A549 (cell line): ENCODE measurements at regions of chr2 and their contacts with region 1.

Region 1: DNA sequence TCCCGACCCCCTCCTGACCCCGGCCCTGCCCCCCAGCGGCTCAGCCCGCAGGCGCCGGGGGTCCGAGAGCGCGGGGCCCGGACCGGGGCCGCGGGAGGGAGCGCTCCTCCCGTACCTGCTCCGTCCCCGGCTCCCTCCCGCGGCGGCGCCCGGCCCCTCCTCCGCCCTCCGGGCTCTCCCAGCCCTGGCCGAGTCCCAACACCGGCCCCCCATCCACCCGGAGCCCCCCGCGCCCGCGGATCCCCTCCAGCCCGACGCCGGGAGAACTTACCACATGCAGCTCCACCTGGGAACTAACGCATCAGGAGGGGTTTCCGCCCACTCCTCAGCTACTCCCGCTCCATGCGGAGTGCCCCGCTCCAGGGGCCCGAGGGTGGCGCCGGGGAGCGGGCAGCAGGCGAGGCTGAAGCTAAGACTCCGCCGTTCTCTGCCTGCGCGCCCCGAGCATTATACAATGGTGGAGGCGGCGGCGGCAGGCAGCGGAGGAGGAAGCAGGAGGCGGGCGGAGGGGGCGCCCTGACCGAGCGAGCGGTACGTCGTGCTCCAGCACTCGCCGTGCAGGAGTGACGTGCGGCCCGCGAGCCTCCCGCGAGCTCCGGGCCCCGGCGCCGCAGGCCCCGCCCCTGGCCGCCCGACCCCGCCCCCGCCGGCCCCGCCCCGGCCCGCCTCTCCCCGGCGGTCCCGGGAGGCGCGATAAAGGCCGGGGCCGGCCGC is at the start of gene SERTAD2:
- DNase-seq: peak; percentile 82 to 91
- ATAC-seq: peak; percentile 83 to 86
- H3K4me3 ChIP-seq: peak within 1 kb of the TSS; percentile 80
- H3K27ac ChIP-seq: peak within 1 kb of the TSS; percentile 93 to 99
- H3K4me1 ChIP-seq: peaks cover 49% of the 10 kb centered on the region
- CTCF ChIP-seq: peak; percentile 18; the same call in 1 of the 3 replicates
- EP300 ChIP-seq: no peak
- POLR2A ChIP-seq: peak; percentile 89
- RAD21 ChIP-seq: peak in 1 of 2 experiments; percentile 31; a peak in 1 of 5 replicates
- polyA plus RNA-seq, gene SERTAD2: 11.8 and 14.0 TPM in 2 replicates

Region 2: DNA sequence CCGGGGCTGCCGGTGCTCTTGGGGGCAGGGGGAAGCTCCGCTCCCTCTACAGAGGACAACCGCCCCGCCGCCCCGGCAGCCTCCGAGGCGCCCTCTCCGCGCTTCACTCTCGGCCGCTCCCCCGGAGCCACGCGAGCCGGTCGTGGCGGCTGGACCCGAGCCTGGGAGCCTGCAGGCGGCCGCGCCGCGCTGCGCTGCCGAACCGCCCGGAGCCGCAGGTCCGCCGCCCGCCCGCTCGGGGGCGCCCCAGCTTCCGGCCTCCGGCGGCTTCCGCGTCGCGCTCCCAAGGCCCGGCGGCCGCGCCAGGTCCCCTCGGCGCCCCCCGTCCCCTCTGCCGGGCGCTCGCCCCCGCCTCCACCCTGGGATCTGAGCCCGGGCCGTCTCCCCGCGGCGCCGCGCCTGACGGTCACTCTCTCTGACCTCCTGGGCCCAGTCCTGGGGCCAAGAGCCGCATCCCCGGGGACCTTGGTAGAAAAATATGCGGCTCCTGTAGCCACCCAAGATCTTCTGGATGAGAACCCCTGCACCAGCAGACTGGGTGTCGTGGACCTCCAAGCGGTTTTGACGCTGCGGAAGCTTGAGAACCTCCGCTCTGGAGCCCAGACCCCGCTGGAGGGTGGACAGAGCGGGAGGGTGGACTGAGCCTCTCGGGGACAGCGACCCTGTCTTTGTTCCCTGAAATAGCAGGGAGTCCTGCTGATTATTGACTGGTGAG is 44.1 kb before region 1 on chr2:
- CTCF ChIA-PET with region 1: interaction called, 28 read pairs
- POLR2A ChIA-PET with region 1: interaction called, 10 read pairs
- DNase-seq: peak; percentile 80 to 88
- ATAC-seq: peak; percentile 90
- H3K4me3 ChIP-seq: peak overlapping the region; percentile 55
- H3K27ac ChIP-seq: peak overlapping the region; percentile 85 to 97
- H3K4me1 ChIP-seq: 0 out of 3 replicates have a peak, but pooled peaks cover 4% of the 10 kb centered on the region
- CTCF ChIP-seq: peak; percentile 92
- EP300 ChIP-seq: no peak
- POLR2A ChIP-seq: peak; percentile 77; the same call in 1 of the 2 replicates
- RAD21 ChIP-seq: peak; percentile 6 to 65; a peak in 3 of 5 replicates

Region 3: DNA sequence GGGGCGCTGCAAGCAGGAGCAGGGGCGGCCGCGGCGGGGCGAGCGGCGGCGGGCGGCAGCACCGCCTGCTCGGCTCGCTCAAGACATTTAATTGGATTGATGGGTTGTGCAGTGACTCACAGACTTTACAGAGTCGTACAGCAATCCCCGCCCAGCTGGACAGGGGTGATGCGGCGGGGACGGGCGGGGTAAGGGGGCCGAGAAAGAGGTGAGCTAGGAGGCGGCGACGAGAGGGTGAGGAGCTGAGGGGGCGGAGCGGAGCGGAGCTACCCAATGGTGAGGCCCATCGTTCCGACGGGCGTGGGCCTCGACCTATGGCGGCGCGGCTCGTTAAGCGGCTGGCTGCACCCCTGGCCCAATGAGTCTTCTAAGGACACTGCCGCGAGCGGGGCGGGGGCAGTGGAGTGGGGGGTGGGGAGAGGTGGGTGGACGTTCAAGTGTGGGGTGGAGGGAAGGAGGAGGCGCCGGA is 97.3 kb after region 1 on chr2:
- CTCF ChIA-PET with region 1: interaction called, 50 read pairs
- POLR2A ChIA-PET with region 1: interaction called, 172 read pairs
- DNase-seq: peak in 1 of 2 experiments; percentile 100
- ATAC-seq: peak; percentile 85 to 94
- H3K4me3 ChIP-seq: peak overlapping the region; percentile 52
- H3K27ac ChIP-seq: peak overlapping the region; percentile 73 to 96
- H3K4me1 ChIP-seq: peaks cover 22% of the 10 kb centered on the region
- CTCF ChIP-seq: no peak
- EP300 ChIP-seq: no peak
- POLR2A ChIP-seq: peak; percentile 91
- RAD21 ChIP-seq: peak in 1 of 2 experiments; percentile 1; a peak in 2 of 5 replicates

Region 4: DNA sequence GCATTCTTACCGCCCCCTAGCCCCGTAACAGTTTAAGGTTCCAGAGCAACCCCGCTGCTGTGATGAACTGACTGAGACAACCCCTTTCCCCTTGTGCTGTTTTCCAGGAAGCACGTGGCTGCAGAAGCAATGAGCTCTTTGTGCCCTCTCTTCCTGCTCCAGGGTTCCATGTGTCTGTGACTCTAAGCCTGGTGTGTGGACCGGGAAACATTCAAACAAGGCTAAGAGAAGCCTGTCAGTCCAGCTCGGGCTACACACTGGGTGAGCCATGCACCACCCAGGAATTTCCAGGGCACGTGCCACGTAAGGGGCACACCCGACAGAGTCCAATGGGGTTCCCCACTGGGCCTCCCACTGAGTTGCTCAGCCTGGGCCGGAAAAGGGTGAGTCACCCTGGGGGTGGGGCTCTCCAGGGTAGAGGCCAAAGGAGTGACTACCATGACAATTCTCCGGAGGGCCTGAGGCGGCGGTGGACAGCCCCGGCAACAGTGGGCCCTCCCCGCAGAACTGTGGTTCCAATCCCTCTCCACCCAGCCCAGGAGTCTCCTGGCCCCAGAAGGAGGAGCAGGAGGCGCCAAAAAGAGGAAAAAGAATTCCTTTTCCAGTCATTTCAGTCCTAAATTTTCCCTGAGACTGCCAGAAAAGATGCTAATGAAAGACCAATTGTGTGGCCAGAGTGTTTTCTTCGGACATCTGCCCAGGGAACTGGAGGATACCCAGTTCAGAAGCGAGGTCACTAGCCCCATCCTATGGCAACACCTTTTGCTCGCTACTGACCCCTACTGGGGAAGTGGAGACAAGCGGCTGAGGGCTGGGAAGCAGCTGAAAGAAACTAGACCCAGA is 177.8 kb after region 1 on chr2:
- CTCF ChIA-PET with region 1: interaction called, 29 read pairs
- POLR2A ChIA-PET with region 1: interaction called, 20 read pairs
- DNase-seq: peak; percentile 97 to 98
- ATAC-seq: peak; percentile 95 to 97
- H3K4me3 ChIP-seq: peak overlapping the region; percentile 11; the same call in 1 of the 3 replicates
- H3K27ac ChIP-seq: peak overlapping the region; percentile 65 to 89
- H3K4me1 ChIP-seq: peaks cover 36% of the 10 kb centered on the region
- CTCF ChIP-seq: peak; percentile 95
- EP300 ChIP-seq: peak; percentile 22 to 59; a peak in 2 of 5 replicates
- POLR2A ChIP-seq: no peak
- RAD21 ChIP-seq: peak; percentile 68 to 71

Region 5: DNA sequence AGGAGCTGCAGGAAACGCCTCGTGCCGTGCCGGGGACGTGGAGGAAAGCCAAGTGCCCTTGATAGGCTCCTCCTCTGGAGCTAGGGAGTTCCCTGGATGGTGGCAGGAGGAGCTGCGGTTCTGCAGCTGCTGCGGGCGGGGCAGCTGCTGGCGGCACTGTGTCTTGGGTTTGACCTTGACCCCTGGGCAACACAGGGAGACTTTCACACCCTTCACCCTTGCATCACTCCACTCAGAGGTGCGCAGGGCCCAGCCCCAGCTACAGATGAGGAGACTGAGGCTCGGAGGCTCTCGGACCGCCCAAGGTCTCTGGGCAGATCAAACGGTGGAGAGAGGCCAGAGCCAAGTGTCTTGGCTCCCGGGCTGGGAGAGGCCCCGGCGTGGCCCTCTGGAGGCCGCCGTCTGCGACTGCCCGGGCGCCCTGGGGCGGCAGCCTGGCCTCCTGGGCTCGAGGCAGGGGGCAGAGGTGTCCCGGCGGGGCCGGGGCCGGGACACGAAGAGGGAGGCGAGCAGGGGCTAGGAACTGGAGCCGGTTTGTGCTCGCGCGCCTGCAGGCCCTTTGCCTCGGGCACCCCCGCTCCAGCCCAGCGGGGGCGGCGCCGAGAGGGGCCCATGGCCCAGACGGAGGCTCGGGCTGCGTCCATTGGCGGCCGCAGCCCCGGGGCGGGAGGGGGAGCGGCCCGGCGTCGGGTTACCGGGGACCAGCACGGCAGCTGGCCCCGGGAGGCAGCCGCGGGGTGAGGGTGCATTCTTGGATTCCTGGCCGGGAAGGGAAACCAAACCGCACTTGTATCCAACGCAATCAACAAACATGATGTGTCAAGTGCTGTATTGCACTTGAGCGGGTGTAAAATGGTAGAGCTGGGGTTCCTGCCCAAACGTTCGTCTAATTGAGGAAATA is 206.1 kb after region 1 on chr2:
- CTCF ChIA-PET with region 1: interaction called, 16 read pairs
- POLR2A ChIA-PET with region 1: interaction called, 58 read pairs
- DNase-seq: peak; percentile 83 to 93
- ATAC-seq: peak; percentile 83 to 89
- H3K4me3 ChIP-seq: peak overlapping the region; percentile 43
- H3K27ac ChIP-seq: peak overlapping the region; percentile 81 to 90
- H3K4me1 ChIP-seq: peaks cover 26% of the 10 kb centered on the region
- CTCF ChIP-seq: peak; percentile 28; the same call in 2 of the 3 replicates
- EP300 ChIP-seq: no peak
- POLR2A ChIP-seq: peak; percentile 59
- RAD21 ChIP-seq: peak; percentile 1 to 22; a peak in 3 of 5 replicates